ENCODE measurements at regions of chr3 and their contacts with region 1.

Region 1: DNA sequence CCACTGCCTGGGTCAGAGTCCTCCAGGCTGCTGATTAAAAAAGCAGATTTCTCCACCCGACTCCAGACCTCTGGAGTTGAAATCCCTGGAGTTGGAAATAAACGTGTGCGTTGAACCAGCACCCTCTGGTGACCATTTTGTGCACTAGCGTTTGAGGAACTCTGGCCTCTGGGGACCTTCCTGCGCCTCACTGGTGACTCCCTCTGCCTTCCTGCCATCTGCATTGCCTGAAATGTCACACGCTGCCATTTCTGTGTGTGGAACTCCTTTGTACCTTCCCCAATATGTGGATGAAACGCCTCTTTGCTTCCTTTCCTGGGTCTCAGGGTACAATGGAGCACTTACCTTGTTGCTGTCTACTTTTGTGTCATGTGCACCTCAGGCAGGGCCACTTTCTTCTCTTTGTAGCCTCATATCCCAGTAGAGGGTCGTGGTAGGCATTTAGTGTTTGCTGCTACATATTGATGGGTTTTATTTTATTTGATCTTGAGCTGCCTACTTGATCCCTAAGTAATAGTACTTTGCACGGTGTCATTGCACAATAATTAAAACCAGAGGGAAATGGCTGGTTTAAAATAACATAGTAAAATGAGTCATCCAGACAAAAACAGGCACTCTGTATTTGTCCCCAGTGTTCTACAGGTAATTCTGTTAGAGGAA is 56.8 kb downstream of the GPR171 start:
- DNase-seq: peak; percentile 85 to 92 (median 90)
- H3K4me3 ChIP-seq: peak overlapping the region in 4 of 7 experiments; percentile 39 to 70 (median 46)
- H3K27ac ChIP-seq: peak overlapping the region; percentile 6 to 70
- H3K4me1 ChIP-seq: peaks cover 8 to 45% (median 33%) of the 10 kb centered on the region in 4 experiments
- H3K27me3 ChIP-seq: no peaks in the 10 kb centered on the region

Region 2: DNA sequence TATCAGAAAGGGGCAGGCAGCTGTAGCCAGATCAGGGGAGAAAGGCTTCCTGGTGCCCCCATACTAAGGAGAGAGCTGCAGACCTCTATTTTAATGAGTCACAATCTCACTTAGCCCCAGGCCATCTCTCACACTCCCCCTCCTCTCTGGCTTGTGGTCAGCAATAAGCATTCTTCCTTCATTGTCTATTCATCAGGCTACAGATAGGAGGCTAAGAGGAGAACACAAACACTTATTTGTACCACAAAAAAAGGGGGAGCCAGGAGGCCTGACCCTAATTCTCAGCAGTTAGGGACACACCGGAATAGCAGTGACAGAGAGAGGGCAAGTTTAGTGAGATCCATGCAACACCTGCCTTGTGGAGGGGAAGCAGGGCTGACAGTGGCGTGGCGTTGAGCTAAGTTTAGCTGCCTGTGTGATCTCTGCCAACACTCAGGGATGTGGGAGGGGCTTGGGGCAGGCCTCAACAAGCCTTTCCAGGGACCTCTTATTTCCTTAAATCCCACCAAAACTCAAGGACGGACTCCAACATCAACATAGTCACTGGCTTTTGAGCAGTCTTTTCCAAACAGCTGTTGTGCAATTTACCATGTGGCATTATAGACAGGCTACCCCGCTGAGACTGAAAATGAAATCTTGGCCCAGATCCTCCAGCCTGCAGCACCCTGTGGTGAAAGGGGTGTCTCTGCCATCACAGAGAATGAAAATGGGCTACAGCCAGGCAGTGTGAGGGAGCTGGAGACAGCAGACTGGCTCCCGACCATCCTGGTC is 930.0 kb before region 1 on chr3:
- CTCF ChIA-PET with region 1: no interaction called
- POLR2A ChIA-PET with region 1: no interaction called
- DNase-seq: peak in 1 of 3 donors; percentile 24
- H3K4me3 ChIP-seq: no peak overlapping the region
- H3K27ac ChIP-seq: no peak overlapping the region
- H3K4me1 ChIP-seq: peaks cover 0 to 4% (median 0%) of the 10 kb centered on the region in 4 experiments
- H3K27me3 ChIP-seq: peaks cover 0 to 7% (median 6%) of the 10 kb centered on the region in 5 experiments

Region 3: GRCh38 chr3:151008699-151009098 is 137.5 kb before region 1 on chr3:
- CTCF ChIA-PET with region 1: interaction called, 36 read pairs
- POLR2A ChIA-PET with region 1: no interaction called
- DNase-seq: peak; percentile 61 to 71 (median 62)
- H3K4me3 ChIP-seq: no peak overlapping the region
- H3K27ac ChIP-seq: no peak overlapping the region
- H3K4me1 ChIP-seq: peaks cover 0 to 2% (median 0%) of the 10 kb centered on the region in 4 experiments
- H3K27me3 ChIP-seq: no peaks in the 10 kb centered on the region

Region 4: GRCh38 chr3:151086484-151087456 is 59.4 kb before region 1 on chr3:
- CTCF ChIA-PET with region 1: interaction called, 250 read pairs
- POLR2A ChIA-PET with region 1: interaction called, 7 read pairs
- DNase-seq: peak; percentile 94 to 97 (median 94)
- H3K4me3 ChIP-seq: peak overlapping the region; percentile 56 to 93 (median 82)
- H3K27ac ChIP-seq: peak overlapping the region; percentile 65 to 80
- H3K4me1 ChIP-seq: peaks cover 4 to 49% (median 30%) of the 10 kb centered on the region in 4 experiments
- H3K27me3 ChIP-seq: peaks cover 0 to 11% (median 0%) of the 10 kb centered on the region in 5 experiments

Region 5: GRCh38 chr3:151113343-151114014 is 32.7 kb before region 1 on chr3:
- CTCF ChIA-PET with region 1: interaction called, 17 read pairs
- POLR2A ChIA-PET with region 1: no interaction called
- DNase-seq: peak in 1 of 3 donors; percentile 43
- H3K4me3 ChIP-seq: no peak overlapping the region
- H3K27ac ChIP-seq: no peak overlapping the region
- H3K4me1 ChIP-seq: peaks cover 0 to 35% (median 12%) of the 10 kb centered on the region in 4 experiments
- H3K27me3 ChIP-seq: no peaks in the 10 kb centered on the region

Region 6: DNA sequence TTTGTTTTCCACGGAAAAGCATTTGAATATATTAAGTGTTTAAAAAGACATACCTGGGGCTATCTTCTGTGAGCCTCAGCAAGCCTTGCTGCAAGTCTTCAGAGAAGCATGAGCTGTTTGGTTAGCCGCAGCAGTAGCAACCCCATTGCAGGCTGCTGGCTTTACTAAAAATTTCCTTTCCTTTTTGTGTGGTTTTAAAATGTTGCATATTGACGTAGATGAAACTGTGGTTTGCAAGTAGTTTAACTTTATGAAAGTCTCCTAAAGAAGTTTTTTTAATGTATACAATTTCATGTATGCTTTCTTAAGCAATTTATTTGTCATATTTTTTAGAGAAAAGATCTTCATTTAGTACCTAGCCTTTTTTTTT is 56.8 kb after region 1 on chr3 and contains the start of gene GPR171:
- CTCF ChIA-PET with region 1: no interaction called
- POLR2A ChIA-PET with region 1: no interaction called
- DNase-seq: peak in 2 of 3 donors; percentile 44 to 56
- H3K4me3 ChIP-seq: no peak within 1 kb of the TSS
- H3K27ac ChIP-seq: peak within 1 kb of the TSS in 1 of 2 experiments; percentile 21
- H3K4me1 ChIP-seq: peaks cover 0 to 16% (median 6%) of the 10 kb centered on the region in 4 experiments
- H3K27me3 ChIP-seq: no peaks in the 10 kb centered on the region

Measured in common myeloid progenitor, CD34-positive (primary cell).